MCF 10A (cell line): ENCODE measurements at regions of chr1 and their contacts with region 1.

Region 1: GRCh38 chr1:37989361-37989930 is 376 bp downstream of the SF3A3 start:
- DNase-seq: peak; percentile 40
- H3K4me3 Mint-ChIP-seq: peak overlapping the region; percentile 88
- H3K27ac Mint-ChIP-seq: peak overlapping the region; percentile 82
- H3K4me1 Mint-ChIP-seq: peaks cover 3% of the 10 kb centered on the region
- H3K27me3 Mint-ChIP-seq: no peaks in the 10 kb centered on the region
- CTCF ChIP-seq: no peak

Region 2: DNA sequence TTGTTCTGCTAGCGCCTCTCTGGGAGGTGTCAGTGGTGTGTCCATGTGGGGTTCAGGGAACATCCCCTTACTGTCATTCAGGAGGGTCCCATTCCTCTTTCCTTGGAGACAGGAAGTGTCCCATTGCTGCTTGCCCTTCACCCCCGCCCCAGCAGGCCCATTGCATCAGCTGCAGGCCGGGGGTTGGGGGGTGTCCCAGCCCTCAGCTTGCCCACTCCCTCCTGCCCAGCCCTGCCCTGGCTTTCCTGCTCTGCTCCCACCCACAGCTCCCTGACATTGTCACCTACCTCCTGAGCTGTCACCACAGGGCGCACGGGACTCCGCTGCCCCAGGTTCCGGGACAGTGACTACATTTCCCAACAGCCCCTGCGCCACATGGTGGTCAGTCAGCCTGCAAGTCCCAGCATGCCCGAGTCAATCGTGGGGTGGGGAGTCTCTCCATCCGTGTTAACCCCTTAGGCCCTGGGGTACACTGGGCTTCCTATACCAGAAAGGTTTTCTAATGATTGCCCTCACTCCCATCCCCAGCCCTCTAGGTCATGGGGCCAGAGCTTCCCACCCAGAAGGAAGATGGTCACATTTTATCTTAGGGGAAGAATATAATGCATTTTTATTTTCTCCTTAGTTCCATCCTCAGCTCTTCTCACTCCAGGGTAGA is 42.6 kb before region 1 on chr1 and contains the start of gene INPP5B:
- CTCF ChIA-PET with region 1: no interaction called
- POLR2A ChIA-PET with region 1: no interaction called
- intact Hi-C with region 1: no loop called
- DNase-seq: no peak
- H3K4me3 Mint-ChIP-seq: peak within 1 kb of the TSS; percentile 33
- H3K27ac Mint-ChIP-seq: no peak within 1 kb of the TSS
- H3K4me1 Mint-ChIP-seq: no peaks in the 10 kb centered on the region
- H3K27me3 Mint-ChIP-seq: no peaks in the 10 kb centered on the region
- CTCF ChIP-seq: no peak
- total RNA-seq, gene INPP5B: 4.7 and 5.9 TPM in 2 replicates

Region 3: DNA sequence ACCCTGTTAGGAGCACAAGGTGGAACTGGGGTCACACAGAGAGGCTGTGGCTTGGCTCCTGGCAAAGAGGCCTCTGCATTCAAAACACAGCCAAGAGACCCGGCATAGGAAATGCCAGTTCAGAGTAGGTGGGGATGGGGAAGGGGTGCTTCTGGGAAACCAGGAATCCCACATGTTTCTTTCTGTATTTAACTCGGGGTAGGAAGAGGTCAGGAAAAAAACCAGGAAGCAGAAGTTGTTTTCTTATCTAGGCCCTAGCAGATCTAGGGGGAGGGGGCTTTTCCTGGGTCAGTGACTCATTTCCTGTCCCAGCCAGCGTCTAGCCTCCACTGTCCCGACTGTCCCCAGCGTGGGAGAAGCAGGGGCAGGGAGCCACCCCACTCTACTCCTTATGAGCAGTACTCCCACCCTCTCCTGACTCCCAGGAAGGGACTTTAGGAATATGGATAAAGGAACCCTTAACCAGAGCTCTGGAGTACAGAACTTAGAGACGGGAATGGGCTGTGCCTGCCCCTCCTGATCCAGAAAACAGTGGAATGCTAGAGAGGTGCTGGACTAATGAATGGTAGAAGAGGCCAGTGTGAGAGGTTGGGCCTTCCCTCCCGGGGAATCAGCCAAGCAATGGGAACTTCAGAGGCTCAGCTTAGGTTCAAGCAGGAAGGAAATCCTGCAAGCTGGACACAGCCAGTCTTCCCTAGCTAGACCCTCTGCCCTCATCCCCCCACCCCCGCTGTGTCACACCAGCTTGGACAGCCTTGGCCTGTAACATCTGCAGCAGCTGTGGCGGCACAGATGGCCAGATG is 10.2 kb after region 1 on chr1:
- CTCF ChIA-PET with region 1: interaction called, 63 read pairs
- POLR2A ChIA-PET with region 1: interaction called, 27 read pairs
- intact Hi-C with region 1: no loop called
- DNase-seq: peak; percentile 30
- H3K4me3 Mint-ChIP-seq: peak overlapping the region; percentile 33
- H3K27ac Mint-ChIP-seq: peak overlapping the region; percentile 88
- H3K4me1 Mint-ChIP-seq: peaks cover 42% of the 10 kb centered on the region
- H3K27me3 Mint-ChIP-seq: no peaks in the 10 kb centered on the region
- CTCF ChIP-seq: no peak

Region 4: GRCh38 chr1:38012363-38013226 is 23.1 kb after region 1 on chr1 and contains the start of gene UTP11:
- CTCF ChIA-PET with region 1: interaction called, 42 read pairs
- POLR2A ChIA-PET with region 1: interaction called, 26 read pairs
- intact Hi-C with region 1: no loop called
- DNase-seq: peak; percentile 100
- H3K4me3 Mint-ChIP-seq: peak within 1 kb of the TSS; percentile 97
- H3K27ac Mint-ChIP-seq: peak within 1 kb of the TSS; percentile 99
- H3K4me1 Mint-ChIP-seq: peaks cover 20% of the 10 kb centered on the region
- H3K27me3 Mint-ChIP-seq: no peaks in the 10 kb centered on the region
- CTCF ChIP-seq: no peak
- total RNA-seq, gene UTP11: 66.5 and 70.3 TPM in 2 replicates

Region 5: GRCh38 chr1:38018864-38019343 is 29.5 kb after region 1 on chr1:
- CTCF ChIA-PET with region 1: interaction called, 42 read pairs
- POLR2A ChIA-PET with region 1: interaction called, 19 read pairs
- intact Hi-C with region 1: loop called (anchors 1 kb)
- DNase-seq: peak; percentile 36
- H3K4me3 Mint-ChIP-seq: no peak overlapping the region
- H3K27ac Mint-ChIP-seq: no peak overlapping the region
- H3K4me1 Mint-ChIP-seq: peaks cover 4% of the 10 kb centered on the region
- H3K27me3 Mint-ChIP-seq: no peaks in the 10 kb centered on the region
- CTCF ChIP-seq: peak; percentile 37

Region 6: DNA sequence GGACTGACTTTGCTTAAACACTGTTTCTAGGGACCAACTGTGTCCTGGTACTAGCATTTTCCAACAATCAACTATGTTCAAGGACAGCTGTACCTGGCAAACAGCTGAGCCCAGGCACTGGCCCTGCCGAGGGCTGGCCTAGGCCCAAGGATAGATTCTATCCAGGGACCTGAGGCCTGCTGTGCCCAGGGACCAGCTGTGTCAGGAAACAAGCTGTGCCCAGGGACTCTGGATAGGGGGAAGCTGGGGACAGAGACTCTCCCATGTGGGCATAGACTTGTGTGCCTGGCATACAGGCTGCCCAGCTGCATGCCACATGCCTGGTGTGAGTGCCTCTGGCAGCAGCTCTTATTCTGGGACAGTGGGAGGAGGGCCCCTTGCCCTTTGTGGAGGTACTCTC is 95.3 kb after region 1 on chr1:
- CTCF ChIA-PET with region 1: no interaction called
- POLR2A ChIA-PET with region 1: no interaction called
- intact Hi-C with region 1: no loop called
- DNase-seq: no peak
- H3K4me3 Mint-ChIP-seq: no peak overlapping the region
- H3K27ac Mint-ChIP-seq: no peak overlapping the region
- H3K4me1 Mint-ChIP-seq: no peaks in the 10 kb centered on the region
- H3K27me3 Mint-ChIP-seq: peaks cover 4% of the 10 kb centered on the region
- CTCF ChIP-seq: no peak